Activated CD4-positive, alpha-beta T cell treated with anti-CD3 and anti-CD28 coated beads for 36 hours (primary cell): ENCODE measurements at regions of chr7 and their contacts with region 1.

Region 1: DNA sequence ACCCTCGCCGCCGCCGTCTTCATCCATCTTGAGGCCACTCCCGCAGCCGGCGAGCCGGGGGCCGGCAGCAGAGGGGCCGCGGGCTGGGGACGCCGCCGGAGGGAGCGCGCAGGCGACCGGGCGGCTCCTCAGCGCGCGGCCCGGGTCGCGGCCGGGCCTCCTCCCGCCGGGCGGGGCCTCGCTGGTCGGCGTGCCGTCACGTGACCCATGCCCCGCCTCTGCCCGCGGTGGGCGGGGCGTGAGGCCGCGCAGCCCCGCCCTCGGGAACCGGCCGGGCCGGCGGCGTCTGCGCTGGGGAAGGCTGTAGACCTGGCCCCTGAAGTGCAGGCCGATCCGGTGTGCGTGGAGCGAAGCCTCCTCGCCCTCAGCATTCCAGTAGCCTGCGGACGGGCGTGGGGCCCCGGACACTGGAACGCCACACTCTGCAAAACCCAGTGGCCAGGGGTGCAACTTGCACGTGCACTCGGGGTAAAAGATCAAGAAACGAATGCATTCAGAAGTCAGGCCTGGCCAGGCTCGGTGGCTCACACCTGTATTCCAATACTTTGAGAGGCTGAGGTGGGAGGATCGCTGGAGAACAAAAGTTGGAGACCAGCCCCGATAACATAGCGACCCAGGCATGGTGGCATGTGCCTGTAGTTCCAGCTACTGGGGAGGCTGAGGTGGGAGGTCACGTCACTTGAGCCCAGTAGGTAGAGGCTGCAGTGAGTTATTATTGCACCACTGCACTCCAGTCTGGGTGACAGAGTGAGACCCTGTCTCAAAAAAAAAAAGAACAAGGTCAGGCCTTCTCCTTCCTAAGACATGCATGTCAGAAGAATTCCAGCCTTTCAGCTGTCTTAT is at the start of gene CYTH3:
- DNase-seq: peak; percentile 84
- ATAC-seq: peak; percentile 94
- H3K4me3 Mint-ChIP-seq: peak within 1 kb of the TSS; percentile 80
- H3K27ac Mint-ChIP-seq: peak within 1 kb of the TSS; percentile 35
- H3K4me1 Mint-ChIP-seq: peaks cover 17% of the 10 kb centered on the region
- H3K27me3 Mint-ChIP-seq: peaks cover 19% of the 10 kb centered on the region
- total RNA-seq, gene CYTH3: 0.75 to 1.2 TPM

Region 2: GRCh38 chr7:5423844-5424688 is 848.6 kb before region 1 on chr7:
- CTCF ChIA-PET with region 1: no interaction called
- POLR2A ChIA-PET with region 1: no interaction called
- intact Hi-C with region 1: loop called in 1 of 2 experiments (anchors 5 kb)
- DNase-seq: peak; percentile 70
- ATAC-seq: peak; percentile 60
- H3K4me3 Mint-ChIP-seq: peak overlapping the region; percentile 62
- H3K27ac Mint-ChIP-seq: no peak overlapping the region
- H3K4me1 Mint-ChIP-seq: peaks cover 35% of the 10 kb centered on the region
- H3K27me3 Mint-ChIP-seq: peaks cover 56% of the 10 kb centered on the region

Region 3: GRCh38 chr7:5634107-5634950 is 638.4 kb before region 1 on chr7:
- CTCF ChIA-PET with region 1: no interaction called
- POLR2A ChIA-PET with region 1: no interaction called
- intact Hi-C with region 1: no loop called
- DNase-seq: no peak
- ATAC-seq: no peak
- H3K4me3 Mint-ChIP-seq: no peak overlapping the region
- H3K27ac Mint-ChIP-seq: peak overlapping the region; percentile 65
- H3K4me1 Mint-ChIP-seq: peaks cover 33% of the 10 kb centered on the region
- H3K27me3 Mint-ChIP-seq: no peaks in the 10 kb centered on the region

Region 4: GRCh38 chr7:5780801-5781496 is 491.8 kb before region 1 on chr7:
- CTCF ChIA-PET with region 1: no interaction called
- POLR2A ChIA-PET with region 1: no interaction called
- intact Hi-C with region 1: loop called in 1 of 2 experiments (anchors 5 kb)
- DNase-seq: peak; percentile 61
- ATAC-seq: peak; percentile 19
- H3K4me3 Mint-ChIP-seq: peak overlapping the region; percentile 78
- H3K27ac Mint-ChIP-seq: peak overlapping the region; percentile 80
- H3K4me1 Mint-ChIP-seq: peaks cover 45% of the 10 kb centered on the region
- H3K27me3 Mint-ChIP-seq: no peaks in the 10 kb centered on the region

Region 5: DNA sequence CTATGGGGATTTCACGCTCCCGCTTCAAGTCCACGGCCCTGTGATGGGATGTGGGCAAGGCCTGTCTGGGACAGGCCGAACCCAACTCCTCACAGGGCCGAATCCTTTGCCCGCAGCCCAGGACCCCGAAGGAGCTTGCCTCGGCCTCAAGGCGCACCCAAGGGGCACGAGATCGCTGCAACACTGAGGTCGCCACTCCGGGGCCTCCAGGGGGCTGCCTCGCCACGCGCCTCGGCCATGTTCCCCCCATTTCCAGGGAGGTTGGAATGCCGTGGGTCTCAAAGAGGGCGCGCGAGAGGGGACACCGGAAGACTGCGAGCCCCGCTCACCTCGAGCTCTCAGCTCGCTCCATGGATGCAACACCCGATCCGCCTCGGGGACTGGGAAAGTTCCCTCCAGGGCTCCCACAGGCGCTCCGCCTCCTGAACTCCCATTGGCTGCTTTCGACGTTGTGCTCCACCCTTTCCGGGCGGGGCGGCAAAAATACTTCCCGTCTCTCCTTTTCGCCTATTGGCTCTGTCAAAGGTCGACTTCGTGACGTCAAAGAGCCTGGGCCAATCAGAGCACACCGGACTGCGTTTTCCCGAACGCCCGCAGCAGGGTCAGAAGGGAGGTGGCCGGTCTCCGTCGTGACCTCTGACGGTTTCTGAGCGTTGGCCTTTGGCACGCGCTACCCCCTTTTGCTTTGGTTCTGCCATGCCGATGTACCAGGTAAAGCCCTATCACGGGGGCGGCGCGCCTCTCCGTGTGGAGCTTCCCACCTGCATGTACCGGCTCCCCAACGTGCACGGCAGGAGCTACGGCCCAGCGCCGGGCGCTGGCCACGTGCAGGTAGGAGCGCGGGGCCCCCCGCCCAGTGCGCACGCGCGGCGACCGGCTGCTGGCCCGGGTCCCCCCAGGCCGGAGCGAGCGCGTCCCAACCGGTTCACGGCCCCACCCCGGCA is 263.8 kb before region 1 on chr7 and contains the starts of genes AIMP2 and PMS2:
- CTCF ChIA-PET with region 1: no interaction called
- POLR2A ChIA-PET with region 1: no interaction called
- intact Hi-C with region 1: loop called in 1 of 2 experiments (anchors 1 kb)
- DNase-seq: peak; percentile 98
- ATAC-seq: peak; percentile 90
- H3K4me3 Mint-ChIP-seq: peak within 1 kb of the TSS; percentile 88
- H3K27ac Mint-ChIP-seq: peak within 1 kb of the TSS; percentile 91
- H3K4me1 Mint-ChIP-seq: peaks cover 42% of the 10 kb centered on the region
- H3K27me3 Mint-ChIP-seq: no peaks in the 10 kb centered on the region
- total RNA-seq, gene AIMP2: 50.1 to 56.0 TPM
- total RNA-seq, gene PMS2: 26.9 to 29.0 TPM

Region 6: DNA sequence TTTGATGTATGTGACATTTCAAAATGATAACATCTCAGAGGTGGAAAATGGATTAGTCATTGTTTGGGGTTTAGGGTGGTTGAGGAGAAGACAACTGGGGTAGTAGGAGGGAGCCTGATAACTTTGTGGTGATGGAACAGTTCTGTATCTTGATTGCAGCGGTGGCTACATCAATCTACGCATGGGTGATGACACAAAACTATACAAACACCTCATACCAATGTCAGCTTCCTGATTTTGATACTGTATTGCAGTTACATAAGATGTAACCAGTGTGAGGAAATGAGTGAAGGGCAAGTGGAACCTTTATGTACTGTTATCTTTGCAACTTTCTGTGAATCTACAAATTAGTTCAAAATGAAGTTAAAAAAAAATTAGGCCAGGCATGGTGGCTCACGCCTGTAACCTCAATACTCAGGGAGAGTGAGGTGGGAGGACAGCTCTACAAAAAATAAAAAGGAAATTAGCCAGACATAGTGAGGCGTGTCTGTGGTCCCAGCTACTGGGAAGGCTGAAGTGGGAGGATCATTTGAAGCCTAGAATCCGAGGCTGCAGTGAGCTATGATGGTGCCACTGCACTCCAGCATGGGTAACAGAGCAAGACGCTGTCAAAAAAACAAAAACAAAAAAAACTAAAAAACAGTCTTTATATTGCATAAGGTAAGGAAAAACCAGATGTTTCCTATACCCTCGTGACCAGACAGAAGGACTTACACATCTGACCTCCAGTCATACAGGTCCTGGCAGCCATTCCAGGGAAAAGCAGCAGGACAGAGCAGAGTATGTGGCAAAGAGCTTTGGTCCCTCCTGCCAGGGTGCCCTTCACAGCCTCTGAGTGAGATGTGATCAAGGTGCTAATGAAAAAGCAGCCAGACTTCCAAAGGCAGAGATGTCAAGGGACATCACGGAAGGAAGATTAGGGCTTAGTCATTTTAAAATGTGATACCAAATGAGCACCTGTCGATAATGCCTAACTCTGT is 51.1 kb before region 1 on chr7:
- CTCF ChIA-PET with region 1: no interaction called
- POLR2A ChIA-PET with region 1: no interaction called
- intact Hi-C with region 1: loop called in 1 of 2 experiments (anchors 1 kb)
- DNase-seq: peak; percentile 63
- ATAC-seq: peak; percentile 97
- H3K4me3 Mint-ChIP-seq: peak overlapping the region; percentile 9
- H3K27ac Mint-ChIP-seq: peak overlapping the region; percentile 67
- H3K4me1 Mint-ChIP-seq: peaks cover 18% of the 10 kb centered on the region
- H3K27me3 Mint-ChIP-seq: peaks cover 15% of the 10 kb centered on the region

Region 7: GRCh38 chr7:6256677-6257535 is 15.8 kb before region 1 on chr7:
- CTCF ChIA-PET with region 1: interaction called, 4 read pairs
- POLR2A ChIA-PET with region 1: no interaction called
- intact Hi-C with region 1: loop called (anchors 1 to 2 kb)
- DNase-seq: peak; percentile 79
- ATAC-seq: peak; percentile 90
- H3K4me3 Mint-ChIP-seq: no peak overlapping the region
- H3K27ac Mint-ChIP-seq: no peak overlapping the region
- H3K4me1 Mint-ChIP-seq: peaks cover 38% of the 10 kb centered on the region
- H3K27me3 Mint-ChIP-seq: peaks cover 13% of the 10 kb centered on the region

Region 8: DNA sequence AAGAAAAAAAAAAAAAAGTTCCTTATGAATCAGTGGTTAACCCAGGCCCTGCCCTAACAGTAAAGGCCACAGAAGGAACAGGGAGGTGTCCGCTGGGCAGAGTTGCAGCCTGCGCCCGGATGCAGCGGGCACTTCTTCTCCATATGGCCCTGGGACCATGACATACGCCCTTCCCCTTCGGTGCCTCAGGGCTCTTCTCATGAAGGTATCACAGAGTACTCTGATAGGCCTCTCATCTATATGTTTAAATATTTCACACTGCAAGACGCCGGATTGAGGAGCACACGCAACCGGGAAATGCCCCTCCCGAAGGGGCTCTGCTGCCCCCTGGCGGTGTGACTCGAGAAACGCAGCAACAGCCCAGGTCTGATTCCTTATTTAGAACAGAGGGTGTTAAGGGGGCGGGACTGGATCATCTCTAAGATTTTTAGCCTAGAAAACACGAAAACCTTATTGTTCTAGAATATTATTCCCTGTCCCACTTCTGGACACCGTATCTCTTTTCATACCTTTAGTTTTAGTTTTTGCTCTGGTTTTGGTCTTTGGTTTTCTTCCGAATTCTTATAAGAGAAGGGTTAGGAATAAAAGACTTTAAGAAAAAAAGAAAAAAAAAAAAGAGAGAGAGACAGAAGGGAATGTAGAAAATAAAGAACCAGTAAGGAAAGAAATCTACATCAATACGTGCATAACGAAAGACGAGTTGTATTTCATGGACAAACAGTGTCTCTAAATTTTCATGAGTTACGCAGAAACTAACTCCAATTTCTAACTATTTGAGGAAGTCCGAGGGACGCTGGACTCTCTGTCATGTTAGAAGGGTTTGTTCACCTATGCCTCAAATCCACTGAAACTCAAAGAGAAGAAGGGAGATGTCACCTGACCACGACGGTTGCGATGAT is 163.0 kb after region 1 on chr7:
- CTCF ChIA-PET with region 1: no interaction called
- POLR2A ChIA-PET with region 1: no interaction called
- intact Hi-C with region 1: loop called in 1 of 2 experiments (anchors 5 kb)
- DNase-seq: peak; percentile 94
- ATAC-seq: peak; percentile 85
- H3K4me3 Mint-ChIP-seq: peak overlapping the region; percentile 52
- H3K27ac Mint-ChIP-seq: peak overlapping the region; percentile 80
- H3K4me1 Mint-ChIP-seq: peaks cover 39% of the 10 kb centered on the region
- H3K27me3 Mint-ChIP-seq: no peaks in the 10 kb centered on the region

Region 9: DNA sequence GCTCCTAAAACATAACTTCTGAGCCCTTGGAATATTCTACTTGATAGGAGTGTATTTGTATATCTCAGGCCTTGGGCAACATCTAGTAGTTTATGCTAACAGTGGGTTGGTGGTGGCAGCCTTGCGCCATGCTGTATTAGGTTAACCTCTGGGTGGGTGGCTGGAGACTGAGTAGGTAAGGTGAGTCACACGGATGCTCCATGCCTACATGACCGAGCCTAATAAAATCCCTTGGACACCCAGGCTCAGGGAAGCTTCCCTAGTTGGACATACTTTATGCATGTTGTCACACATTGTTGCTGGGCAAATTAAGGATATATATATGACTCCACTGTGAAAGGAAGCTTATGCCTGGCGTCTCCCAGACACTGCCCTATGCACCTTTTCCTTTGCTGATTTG is 181.0 kb after region 1 on chr7:
- CTCF ChIA-PET with region 1: no interaction called
- POLR2A ChIA-PET with region 1: no interaction called
- intact Hi-C with region 1: no loop called
- DNase-seq: no peak
- ATAC-seq: no peak
- H3K4me3 Mint-ChIP-seq: no peak overlapping the region
- H3K27ac Mint-ChIP-seq: no peak overlapping the region
- H3K4me1 Mint-ChIP-seq: peaks cover 5% of the 10 kb centered on the region
- H3K27me3 Mint-ChIP-seq: no peaks in the 10 kb centered on the region